ENCODE measurements at regions of chr17 and their contacts with region 1.

Region 1: DNA sequence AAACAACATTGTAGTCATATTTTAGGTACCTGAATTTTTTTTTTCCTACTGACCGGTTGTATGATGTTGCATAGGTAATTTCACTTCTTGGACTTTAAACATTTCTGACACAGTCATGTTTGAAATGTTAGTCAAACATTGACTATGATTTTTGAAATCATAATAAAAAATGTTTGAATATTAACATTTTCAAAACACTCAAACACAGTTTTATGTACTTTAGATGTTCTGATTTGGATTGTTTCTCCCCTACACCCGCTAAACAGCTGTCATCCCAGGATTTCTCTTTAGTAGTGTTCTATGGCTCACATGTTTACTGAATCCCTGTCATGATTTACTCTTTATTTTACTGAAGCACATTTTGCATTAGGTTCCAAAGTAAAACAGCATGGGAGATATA is 102.9 kb upstream of the NPEPPS start:
- DNase-seq: no peak
- ATAC-seq: no peak
- H3K4me3 ChIP-seq: no peak overlapping the region
- H3K27ac ChIP-seq: no peak overlapping the region
- H3K4me1 ChIP-seq: no peaks in the 10 kb centered on the region; the same call in 1 of the 2 replicates
- H3K27me3 ChIP-seq: peaks cover 1% of the 10 kb centered on the region; the same call in 1 of the 2 replicates
- CTCF ChIP-seq: no peak

Region 2: GRCh38 chr17:47095268-47095667 is 332.7 kb before region 1 on chr17:
- CTCF ChIA-PET with region 1: no interaction called
- POLR2A ChIA-PET with region 1: interaction called, 11 read pairs
- in situ Hi-C with region 1: no loop called
- intact Hi-C with region 1: no loop called
- DNase-seq: no peak
- ATAC-seq: no peak
- H3K4me3 ChIP-seq: no peak overlapping the region
- H3K27ac ChIP-seq: no peak overlapping the region
- H3K4me1 ChIP-seq: no peaks in the 10 kb centered on the region
- H3K27me3 ChIP-seq: no peaks in the 10 kb centered on the region
- CTCF ChIP-seq: no peak

Region 3: DNA sequence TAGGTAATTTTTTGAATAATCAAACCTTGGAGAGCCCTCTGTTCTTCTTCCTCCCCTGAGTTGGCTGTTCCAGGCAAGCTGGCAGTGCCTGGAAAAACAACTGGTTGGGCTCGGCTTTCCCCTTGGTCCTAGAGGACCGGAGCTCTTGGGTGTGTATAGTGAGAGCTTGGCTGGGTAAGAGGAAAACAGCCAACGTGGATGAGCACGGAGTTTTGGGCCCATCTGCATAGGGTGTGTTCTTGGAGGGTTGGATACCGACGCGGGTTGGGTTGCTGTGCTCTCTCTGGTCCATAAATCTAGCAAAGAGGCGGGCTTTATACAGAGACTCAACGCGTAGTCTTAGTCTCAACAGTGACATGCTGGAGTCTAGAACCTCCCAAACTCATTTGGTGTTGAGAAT is 151.1 kb before region 1 on chr17:
- CTCF ChIA-PET with region 1: no interaction called
- POLR2A ChIA-PET with region 1: no interaction called
- in situ Hi-C with region 1: no loop called
- intact Hi-C with region 1: no loop called
- DNase-seq: no peak
- ATAC-seq: peak; percentile 87
- H3K4me3 ChIP-seq: no peak overlapping the region
- H3K27ac ChIP-seq: peak overlapping the region; percentile 57; the same call in 1 of the 2 replicates
- H3K4me1 ChIP-seq: peaks cover 18% of the 10 kb centered on the region
- H3K27me3 ChIP-seq: no peaks in the 10 kb centered on the region
- CTCF ChIP-seq: no peak

Region 4: DNA sequence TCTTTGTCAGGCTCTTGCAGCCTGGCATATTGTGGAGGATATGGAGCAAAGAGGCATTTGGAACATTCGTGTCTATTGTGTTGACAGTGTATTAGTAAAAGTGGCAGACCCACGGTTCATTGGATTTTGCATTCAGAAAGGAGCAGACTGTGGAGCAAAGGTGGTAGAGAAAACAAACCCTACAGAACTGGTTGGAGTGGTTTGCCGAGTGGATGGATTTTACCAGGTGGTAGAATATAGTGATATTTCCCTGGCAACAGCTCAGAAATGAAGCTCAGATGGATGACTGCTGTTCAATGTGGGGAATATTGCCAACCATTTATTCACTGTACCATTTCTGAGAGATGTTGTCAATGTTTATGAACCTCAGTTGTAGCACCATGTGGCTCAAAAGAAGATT is 59.7 kb before region 1 on chr17:
- CTCF ChIA-PET with region 1: no interaction called
- POLR2A ChIA-PET with region 1: no interaction called
- in situ Hi-C with region 1: no loop called
- intact Hi-C with region 1: loop called (anchors 10 kb)
- DNase-seq: no peak
- ATAC-seq: no peak
- H3K4me3 ChIP-seq: no peak overlapping the region
- H3K27ac ChIP-seq: no peak overlapping the region
- H3K4me1 ChIP-seq: no peaks in the 10 kb centered on the region
- H3K27me3 ChIP-seq: no peaks in the 10 kb centered on the region
- CTCF ChIP-seq: no peak

Region 5: DNA sequence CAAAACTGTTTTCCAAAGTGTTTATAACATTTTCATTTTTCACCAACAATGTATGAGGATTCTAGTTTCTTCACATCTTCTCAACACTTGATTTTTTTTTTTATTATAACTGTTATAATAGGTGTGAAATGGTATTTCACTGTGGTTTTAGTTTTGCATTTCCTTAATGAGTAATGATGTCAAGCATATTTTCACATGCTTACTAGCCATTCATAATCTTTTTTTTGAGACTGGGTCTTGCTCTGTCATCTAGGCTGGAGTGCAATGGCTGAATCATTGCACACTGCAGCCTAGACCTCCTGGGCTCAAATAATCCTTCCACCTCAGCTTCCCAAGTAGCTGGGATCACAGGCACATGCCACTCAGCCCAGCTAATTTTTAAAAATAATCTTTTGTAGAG is 39.2 kb before region 1 on chr17:
- CTCF ChIA-PET with region 1: no interaction called
- POLR2A ChIA-PET with region 1: no interaction called
- in situ Hi-C with region 1: no loop called
- intact Hi-C with region 1: no loop called
- DNase-seq: no peak
- ATAC-seq: no peak
- H3K4me3 ChIP-seq: no peak overlapping the region
- H3K27ac ChIP-seq: no peak overlapping the region
- H3K4me1 ChIP-seq: no peaks in the 10 kb centered on the region
- H3K27me3 ChIP-seq: no peaks in the 10 kb centered on the region
- CTCF ChIP-seq: no peak

Region 6: GRCh38 chr17:47604598-47604927 is 176.6 kb after region 1 on chr17:
- CTCF ChIA-PET with region 1: no interaction called
- POLR2A ChIA-PET with region 1: no interaction called
- in situ Hi-C with region 1: no loop called
- intact Hi-C with region 1: no loop called
- DNase-seq: no peak
- ATAC-seq: no peak
- H3K4me3 ChIP-seq: no peak overlapping the region
- H3K27ac ChIP-seq: no peak overlapping the region
- H3K4me1 ChIP-seq: no peaks in the 10 kb centered on the region
- H3K27me3 ChIP-seq: no peaks in the 10 kb centered on the region
- CTCF ChIP-seq: no peak